Activated CD8-positive, alpha-beta T cell treated with anti-CD3 and anti-CD28 coated beads for 36 hours (primary cell): ENCODE measurements at regions of chr9 and their contacts with region 1.

Region 1: DNA sequence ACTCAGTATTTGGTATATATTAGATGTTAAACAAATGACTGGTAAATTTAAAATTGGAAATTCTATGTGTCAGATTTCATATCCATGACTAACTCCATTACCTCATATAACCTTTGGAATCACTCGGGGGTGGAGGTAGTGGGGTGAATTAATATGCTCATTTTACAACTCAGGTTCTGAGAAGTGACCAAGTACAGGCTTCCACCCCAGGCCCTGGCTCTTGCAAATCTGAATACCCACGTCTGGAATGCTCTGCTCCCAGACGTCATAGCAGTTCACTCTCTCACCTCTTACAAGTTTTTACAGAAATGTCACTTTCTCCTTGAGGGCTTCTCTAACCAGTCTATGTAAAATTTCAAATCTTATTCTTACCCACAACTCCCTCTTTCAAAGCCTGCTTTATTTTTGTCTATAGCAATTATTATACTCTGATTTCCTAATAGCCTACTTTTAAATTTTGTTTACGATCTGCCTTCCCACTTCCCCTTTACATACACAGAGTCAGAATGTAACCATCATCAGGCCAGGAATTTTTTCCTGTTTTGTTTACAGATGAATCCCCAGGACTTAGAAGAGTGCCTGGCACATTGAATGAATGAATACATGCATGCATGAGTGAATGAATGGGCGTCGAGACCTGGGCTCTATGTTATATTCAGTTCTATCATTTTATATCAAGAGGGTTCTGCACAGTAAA is 134.1 kb upstream of the IFNE start:
- DNase-seq: peak; percentile 18
- ATAC-seq: peak; percentile 26
- H3K4me3 Mint-ChIP-seq: no peak overlapping the region
- H3K27ac Mint-ChIP-seq: no peak overlapping the region
- H3K4me1 Mint-ChIP-seq: peaks cover 37% of the 10 kb centered on the region
- H3K27me3 Mint-ChIP-seq: no peaks in the 10 kb centered on the region
- CTCF ChIP-seq: no peak

Region 2: GRCh38 chr9:21362287-21362686 is 253.9 kb before region 1 on chr9:
- CTCF ChIA-PET with region 1: no interaction called
- POLR2A ChIA-PET with region 1: no interaction called
- intact Hi-C with region 1: no loop called
- DNase-seq: no peak
- ATAC-seq: no peak
- H3K4me3 Mint-ChIP-seq: no peak overlapping the region
- H3K27ac Mint-ChIP-seq: no peak overlapping the region
- H3K4me1 Mint-ChIP-seq: peaks cover 15% of the 10 kb centered on the region
- H3K27me3 Mint-ChIP-seq: peaks cover 14% of the 10 kb centered on the region
- CTCF ChIP-seq: no peak

Region 3: GRCh38 chr9:21473236-21473635 is 143.0 kb before region 1 on chr9:
- CTCF ChIA-PET with region 1: no interaction called
- POLR2A ChIA-PET with region 1: no interaction called
- intact Hi-C with region 1: loop called (anchors 10 kb)
- DNase-seq: no peak
- ATAC-seq: no peak
- H3K4me3 Mint-ChIP-seq: no peak overlapping the region
- H3K27ac Mint-ChIP-seq: no peak overlapping the region
- H3K4me1 Mint-ChIP-seq: peaks cover 2% of the 10 kb centered on the region
- H3K27me3 Mint-ChIP-seq: peaks cover 8% of the 10 kb centered on the region
- CTCF ChIP-seq: no peak

Region 4: DNA sequence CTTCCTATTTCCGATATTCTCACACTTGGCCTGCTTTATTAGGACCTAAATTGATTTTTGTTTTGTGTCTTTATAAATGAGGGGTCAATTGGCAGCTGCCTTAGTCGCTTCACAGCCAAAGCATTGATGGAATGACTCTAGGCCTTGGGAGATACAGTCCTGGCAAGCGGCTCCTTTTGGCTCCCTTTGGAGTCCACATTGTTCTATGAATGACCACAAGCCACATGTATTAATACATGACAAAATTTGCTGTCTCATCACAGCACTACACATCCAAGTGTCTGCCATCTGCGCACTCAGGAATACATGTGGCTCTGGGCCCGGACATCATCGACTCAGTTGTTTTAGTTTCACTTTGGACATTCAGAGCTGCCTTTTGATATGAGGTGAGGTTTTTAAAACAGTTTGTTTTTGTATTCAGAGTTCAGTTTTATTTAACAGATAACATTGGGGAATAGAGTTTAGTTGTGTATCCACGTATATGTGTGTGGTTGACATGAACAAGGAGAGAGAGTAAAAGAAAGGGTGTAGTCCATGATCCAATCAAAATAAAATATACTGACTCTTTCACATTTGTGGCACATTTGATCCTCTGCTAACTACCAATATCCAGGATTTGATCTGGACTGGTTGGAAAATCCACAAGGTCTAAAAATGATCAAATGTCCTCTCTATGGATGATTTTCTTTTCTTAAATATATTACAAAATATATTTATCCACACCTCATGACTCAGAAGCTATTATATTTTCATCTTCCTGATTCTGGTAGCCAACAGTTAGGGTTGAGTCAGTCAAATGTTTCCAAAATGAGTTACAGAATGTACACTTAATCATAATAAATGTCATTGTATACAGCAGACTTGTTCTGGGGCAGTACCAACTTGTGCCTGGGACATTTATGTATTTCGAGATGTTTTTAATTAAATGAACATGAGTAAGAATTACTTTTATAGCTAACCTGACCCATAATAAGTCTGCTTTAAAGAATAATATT is 72.2 kb after region 1 on chr9:
- CTCF ChIA-PET with region 1: no interaction called
- POLR2A ChIA-PET with region 1: interaction called, 3 read pairs
- intact Hi-C with region 1: loop called (anchors 5 kb)
- DNase-seq: peak; percentile 7
- ATAC-seq: peak; percentile 35
- H3K4me3 Mint-ChIP-seq: peak overlapping the region; percentile 10
- H3K27ac Mint-ChIP-seq: peak overlapping the region; percentile 75
- H3K4me1 Mint-ChIP-seq: peaks cover 56% of the 10 kb centered on the region
- H3K27me3 Mint-ChIP-seq: no peaks in the 10 kb centered on the region
- CTCF ChIP-seq: no peak